AG04449 (cell line): ENCODE measurements at regions of chr15 and their contacts with region 1.

Region 1: DNA sequence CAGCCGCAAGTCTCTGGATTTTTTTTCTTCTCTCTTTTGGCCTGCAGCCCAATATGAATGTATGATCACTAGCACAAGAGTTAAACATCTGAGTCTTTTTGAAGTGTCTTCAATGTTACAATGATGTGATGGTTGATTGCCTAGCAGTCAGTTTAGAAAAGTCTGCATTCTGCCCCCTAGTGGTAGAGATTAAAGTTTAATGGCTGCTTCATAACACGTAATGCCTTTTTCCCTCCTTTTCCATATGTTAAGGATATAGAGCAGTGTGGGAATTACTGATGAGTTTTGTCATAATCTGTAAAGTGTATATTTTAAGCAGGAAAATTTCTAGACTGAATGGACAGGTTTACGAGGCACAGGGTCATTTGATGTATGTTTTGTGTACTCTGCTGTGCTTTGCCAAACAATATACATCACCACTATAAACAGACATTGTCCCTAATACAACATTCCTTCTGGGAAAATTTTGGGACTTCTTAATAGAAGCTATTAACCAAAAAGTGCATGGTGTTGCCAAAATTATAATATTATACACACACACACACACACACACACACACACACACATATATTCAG is 1038.5 kb upstream of the NR2F2 start:
- DNase-seq: no peak
- H3K4me3 ChIP-seq: no peak overlapping the region
- CTCF ChIP-seq: peak; percentile 55

Region 2: DNA sequence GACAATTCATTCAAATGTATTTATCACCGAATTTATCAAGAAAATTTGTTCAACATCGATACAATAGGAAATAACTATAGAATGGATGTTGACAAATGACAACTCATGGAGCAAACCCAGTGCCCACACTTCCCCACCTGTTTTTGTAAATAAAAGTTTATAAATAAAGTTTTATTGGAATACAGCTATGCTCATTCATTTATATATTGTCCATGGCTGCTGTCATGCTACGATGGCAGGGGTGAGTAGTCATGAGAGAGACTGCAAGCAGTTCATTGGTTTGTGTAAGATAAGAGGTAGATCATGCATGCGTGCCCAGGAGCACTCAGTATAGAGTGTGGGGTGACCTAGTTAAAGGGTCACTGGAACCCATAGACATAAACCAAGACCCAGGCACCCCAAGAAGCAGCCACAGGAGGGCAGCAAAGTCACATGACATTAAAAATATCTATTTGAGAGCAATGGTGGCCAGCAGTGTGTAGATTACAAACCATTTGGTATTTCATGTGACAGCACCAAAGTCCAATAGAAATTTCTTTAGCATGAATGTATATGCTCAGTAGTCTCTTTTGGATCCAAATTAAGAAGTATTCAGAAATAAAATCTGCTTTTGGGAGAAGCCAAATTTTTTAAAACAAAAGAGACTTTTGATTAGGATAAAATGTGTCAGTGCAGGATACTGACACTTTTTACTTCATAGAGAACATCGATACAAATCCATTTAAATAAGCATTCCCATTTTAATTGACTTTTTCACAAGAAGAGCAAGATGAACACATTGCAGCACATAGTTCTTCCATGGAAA is 265.9 kb before region 1 on chr15:
- CTCF ChIA-PET with region 1: interaction called, 15 read pairs
- POLR2A ChIA-PET with region 1: no interaction called
- DNase-seq: no peak
- H3K4me3 ChIP-seq: no peak overlapping the region
- CTCF ChIP-seq: peak; percentile 61

Region 3: GRCh38 chr15:95304151-95304946 is 12.4 kb after region 1 on chr15:
- CTCF ChIA-PET with region 1: interaction called, 10 read pairs
- POLR2A ChIA-PET with region 1: no interaction called
- DNase-seq: no peak
- H3K4me3 ChIP-seq: no peak overlapping the region
- CTCF ChIP-seq: no peak